Left cardiac atrium (tissue), 4 donors: ENCODE measurements at regions of chr7 and their contacts with region 1.

Region 1: DNA sequence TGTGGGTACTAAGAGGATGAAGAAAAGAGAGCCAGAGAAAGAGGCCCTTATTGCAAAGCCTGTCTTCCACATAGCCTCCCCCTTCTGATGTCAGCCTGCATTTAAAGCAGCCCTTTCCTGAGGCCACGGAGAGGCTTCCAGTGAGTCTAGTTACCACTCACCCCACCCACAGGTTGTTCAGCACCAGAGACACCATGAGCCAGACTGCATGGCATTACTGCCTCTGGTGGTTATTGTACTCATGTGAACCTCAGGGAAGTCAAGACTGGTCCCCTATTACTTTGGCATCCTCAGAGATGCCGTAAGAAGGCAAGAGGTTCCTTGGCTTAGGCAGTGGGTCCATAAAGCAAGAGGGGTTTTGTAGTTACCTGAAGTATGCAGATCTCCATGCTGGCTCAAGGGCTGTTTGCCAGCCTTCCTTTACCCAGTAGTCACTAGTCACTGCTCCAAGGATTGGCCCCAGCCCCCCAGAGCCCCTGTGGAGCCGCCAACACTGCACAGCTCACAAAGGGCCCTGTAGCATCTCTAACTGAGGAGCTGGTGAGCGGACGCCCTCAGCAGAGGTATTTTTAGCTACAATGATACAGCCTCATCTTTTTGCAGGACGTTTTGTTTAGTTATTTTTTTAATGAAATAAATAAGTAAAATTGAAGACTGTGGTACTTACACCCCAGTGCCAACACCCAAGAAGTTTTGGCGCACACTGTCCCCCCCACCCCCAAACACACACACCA is 20.7 kb downstream of the LRRC4 start:
- DNase-seq: no peak
- ATAC-seq: peak; percentile 14 to 36

Region 2: DNA sequence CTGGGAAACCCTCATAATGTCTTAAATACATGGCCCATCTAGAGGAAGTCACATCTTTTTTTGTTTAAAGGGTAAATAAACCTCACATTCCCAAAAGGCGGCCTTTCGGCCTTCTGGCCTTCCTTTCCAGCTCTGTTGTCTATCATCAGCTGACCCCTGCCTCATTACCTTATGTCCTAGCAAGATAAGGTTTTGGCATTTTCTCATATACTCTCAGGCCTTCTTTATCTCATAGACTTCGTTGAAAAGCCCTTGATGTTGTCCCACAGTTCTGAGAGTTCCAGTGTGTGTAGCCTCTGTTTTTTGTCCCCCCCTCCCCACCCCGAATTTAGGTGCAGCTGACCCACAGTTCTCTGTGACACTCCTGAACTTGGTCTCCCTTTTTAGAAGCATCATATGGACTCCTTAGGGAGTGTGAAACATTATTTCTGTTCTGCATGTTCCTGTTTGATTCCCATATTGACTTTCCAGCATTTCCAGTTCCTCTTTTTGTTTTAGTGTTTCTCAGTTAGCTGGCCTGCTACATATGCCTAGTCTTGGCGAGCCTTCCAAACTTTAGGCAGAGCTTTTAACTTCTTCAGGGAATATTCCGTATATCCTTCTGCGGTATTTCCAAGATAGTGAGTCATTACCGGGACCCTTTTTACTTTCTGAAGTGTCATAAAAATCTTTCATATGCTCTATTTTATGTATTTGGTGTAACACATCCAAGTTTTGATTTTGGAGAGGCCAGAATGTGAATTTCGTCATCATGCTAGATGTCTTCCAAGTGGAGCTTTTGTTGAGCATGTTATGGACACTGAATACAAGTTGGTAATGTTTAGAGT is 117.9 kb before region 1 on chr7:
- intact Hi-C with region 1: loop called in 1 of 2 experiments (anchors 5 kb)
- DNase-seq: no peak
- ATAC-seq: no peak

Region 3: GRCh38 chr7:128099204-128099671 is 88.7 kb after region 1 on chr7:
- intact Hi-C with region 1: no loop called
- DNase-seq: no peak
- ATAC-seq: no peak